Activated CD4-positive, alpha-beta T cell treated with anti-CD3 and anti-CD28 coated beads, Interleukin-2, amount 10 ng/mL, durations not matched to agents 24 days and 14 days (primary cell): ENCODE measurements at regions of chr2 and their contacts with region 1.

Region 1: GRCh38 chr2:209423562-209424198 is at the start of gene MAP2:
- DNase-seq: peak; percentile 91
- H3K4me3 Mint-ChIP-seq: peak within 1 kb of the TSS; percentile 81
- H3K27ac Mint-ChIP-seq: peak within 1 kb of the TSS; percentile 43
- H3K4me1 Mint-ChIP-seq: peaks cover 10% of the 10 kb centered on the region
- H3K27me3 Mint-ChIP-seq: peaks cover 36% of the 10 kb centered on the region
- total RNA-seq, gene MAP2: not detected in 2 replicates

Region 2: GRCh38 chr2:208399202-208399601 is 1024.5 kb before region 1 on chr2:
- intact Hi-C with region 1: loop called (anchors 5 kb)
- DNase-seq: no peak
- H3K4me3 Mint-ChIP-seq: no peak overlapping the region
- H3K27ac Mint-ChIP-seq: no peak overlapping the region
- H3K4me1 Mint-ChIP-seq: peaks cover 5% of the 10 kb centered on the region
- H3K27me3 Mint-ChIP-seq: peaks cover 31% of the 10 kb centered on the region

Region 3: DNA sequence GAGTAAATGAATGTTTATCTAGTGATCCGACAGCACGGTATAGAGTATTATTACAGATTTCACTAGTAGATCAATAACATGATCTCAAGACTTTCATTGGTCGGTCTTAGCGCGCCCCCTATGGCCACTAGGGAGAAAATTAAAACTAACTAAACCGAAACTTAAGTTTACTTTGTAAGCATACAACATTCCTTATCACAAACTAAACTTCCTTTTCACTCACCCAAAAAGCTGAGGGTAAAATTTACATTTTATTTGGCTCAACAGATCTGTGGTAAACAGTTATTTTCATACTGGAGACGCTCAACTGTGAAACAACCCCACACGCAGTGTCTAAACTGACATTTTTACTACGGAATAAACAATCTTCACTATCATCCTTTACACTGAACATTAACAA is 215.5 kb before region 1 on chr2:
- intact Hi-C with region 1: no loop called
- DNase-seq: peak; percentile 65
- H3K4me3 Mint-ChIP-seq: peak overlapping the region; percentile 74
- H3K27ac Mint-ChIP-seq: no peak overlapping the region
- H3K4me1 Mint-ChIP-seq: no peaks in the 10 kb centered on the region
- H3K27me3 Mint-ChIP-seq: no peaks in the 10 kb centered on the region

Region 4: GRCh38 chr2:209334198-209335017 is 89.3 kb before region 1 on chr2:
- intact Hi-C with region 1: loop called (anchors 2 kb)
- DNase-seq: peak; percentile 78
- H3K4me3 Mint-ChIP-seq: no peak overlapping the region
- H3K27ac Mint-ChIP-seq: no peak overlapping the region
- H3K4me1 Mint-ChIP-seq: no peaks in the 10 kb centered on the region
- H3K27me3 Mint-ChIP-seq: no peaks in the 10 kb centered on the region

Region 5: DNA sequence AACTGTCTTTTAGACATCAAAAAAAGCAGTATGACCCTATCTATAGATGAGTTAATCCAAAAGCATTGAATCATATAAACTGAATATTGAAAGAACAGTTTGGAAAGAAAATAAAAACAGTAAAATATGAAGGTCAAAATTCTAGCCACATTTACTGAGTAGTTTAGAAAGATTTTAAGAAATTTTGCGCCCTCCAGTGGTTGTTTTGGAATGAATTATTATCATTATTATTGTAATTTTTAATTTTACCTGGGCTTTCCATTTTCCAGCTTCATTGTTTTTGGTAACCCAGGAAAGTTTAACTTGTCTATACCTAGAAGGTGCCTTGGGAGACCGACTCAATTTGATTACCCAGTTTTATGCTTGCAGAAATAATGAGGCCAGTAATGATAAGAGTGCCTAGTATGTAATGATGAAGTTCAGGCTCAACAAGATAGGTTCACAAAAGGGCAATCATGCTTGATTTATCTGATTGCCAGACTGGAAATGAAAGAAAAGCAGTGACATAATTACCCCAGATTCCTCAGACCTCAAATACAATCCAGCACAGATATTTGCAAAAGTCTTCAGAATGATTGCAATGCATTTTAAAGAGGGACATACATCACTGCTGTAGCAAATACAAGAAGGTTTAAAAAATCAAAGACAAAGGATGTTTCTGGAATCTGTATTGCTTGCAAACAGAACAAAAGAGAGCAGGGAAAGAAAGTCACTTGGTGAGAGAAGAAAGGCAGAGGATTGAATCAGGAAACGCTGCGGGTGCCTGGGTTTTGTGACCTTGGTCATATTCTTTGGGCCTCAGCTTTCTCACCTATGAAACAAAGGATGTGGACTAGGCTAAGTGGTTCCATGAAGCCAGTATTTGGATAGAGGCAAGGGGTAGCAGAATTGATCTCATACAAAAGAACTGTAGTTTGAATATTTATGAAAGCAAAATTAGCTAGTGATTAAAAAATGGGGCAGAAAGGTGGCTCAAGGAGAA is 154.0 kb after region 1 on chr2:
- intact Hi-C with region 1: loop called (anchors 5 kb)
- DNase-seq: no peak
- H3K4me3 Mint-ChIP-seq: no peak overlapping the region
- H3K27ac Mint-ChIP-seq: no peak overlapping the region
- H3K4me1 Mint-ChIP-seq: peaks cover 2% of the 10 kb centered on the region
- H3K27me3 Mint-ChIP-seq: peaks cover 5% of the 10 kb centered on the region